ENCODE measurements at regions of chr22 and their contacts with region 1.

Region 1: GRCh38 chr22:23539135-23539838 is 40.8 kb downstream of the IGLL1 start:
- DNase-seq: peak; percentile 72 to 83 (median 76)
- ATAC-seq: peak; percentile 88 to 99 (median 98)
- H3K4me3 ChIP-seq: peak overlapping the region in 3 of 12 donors; percentile 3 to 25 (median 22)
- H3K27ac ChIP-seq: peak overlapping the region in 1 of 12 donors; percentile 39
- H3K4me1 ChIP-seq: peaks cover 0 to 17% (median 0%) of the 10 kb centered on the region in 12 donors
- H3K27me3 ChIP-seq: no peaks in the 10 kb centered on the region
- CTCF ChIP-seq: peak; percentile 76 to 91 (median 85)
- POLR2A ChIP-seq: no peak

Region 2: DNA sequence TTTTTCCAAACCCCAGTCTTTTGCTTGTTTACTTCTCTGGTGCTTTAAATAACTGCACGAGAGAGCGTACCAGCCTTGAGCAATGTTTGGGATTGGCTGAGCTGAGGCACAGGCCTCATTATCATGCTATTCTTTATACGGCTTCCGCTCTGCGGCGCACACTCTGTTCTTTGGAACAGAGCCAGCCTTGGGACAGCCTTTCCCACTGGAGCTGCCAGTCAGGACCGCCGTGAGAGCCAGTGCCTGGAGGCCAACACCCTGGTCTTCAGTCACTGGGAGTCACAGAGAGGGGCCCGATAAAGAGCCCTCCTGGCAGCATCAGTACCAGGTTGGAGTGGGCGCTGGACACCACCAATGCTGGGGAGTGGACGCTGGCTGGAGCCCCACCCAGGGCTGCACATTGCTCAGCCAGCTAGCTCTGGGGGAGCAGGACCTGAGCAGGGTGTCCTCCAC is 233.3 kb before region 1 on chr22:
- intact Hi-C with region 1: loop called in 6 of 10 experiments (anchors 5 to 10 kb)
- DNase-seq: peak; percentile 70 to 91 (median 86)
- ATAC-seq: peak; percentile 88 to 93 (median 91)
- H3K4me3 ChIP-seq: peak overlapping the region in 2 of 12 donors; percentile 19 to 32
- H3K27ac ChIP-seq: peak overlapping the region; percentile 68 to 94 (median 80)
- H3K4me1 ChIP-seq: peaks cover 5 to 32% (median 22%) of the 10 kb centered on the region in 12 donors
- H3K27me3 ChIP-seq: no peaks in the 10 kb centered on the region
- CTCF ChIP-seq: no peak
- POLR2A ChIP-seq: no peak

Region 3: GRCh38 chr22:23385291-23386244 is 153.7 kb before region 1 on chr22:
- intact Hi-C with region 1: loop called in 7 of 10 experiments (anchors 1 to 10 kb)
- DNase-seq: peak; percentile 68 to 89 (median 77)
- ATAC-seq: peak; percentile 49 to 89 (median 82)
- H3K4me3 ChIP-seq: no peak overlapping the region
- H3K27ac ChIP-seq: no peak overlapping the region
- H3K4me1 ChIP-seq: peaks cover 0 to 9% (median 0%) of the 10 kb centered on the region in 12 donors
- H3K27me3 ChIP-seq: peaks cover 0 to 8% (median 0%) of the 10 kb centered on the region in 9 donors
- CTCF ChIP-seq: peak; percentile 92 to 100 (median 98)
- POLR2A ChIP-seq: no peak

Region 4: GRCh38 chr22:23402275-23403151 is 136.8 kb before region 1 on chr22:
- intact Hi-C with region 1: loop called in 5 of 10 experiments (anchors 5 to 10 kb)
- DNase-seq: peak in 1 of 5 donors; percentile 28
- ATAC-seq: peak in 3 of 4 donors; percentile 43 to 76 (median 62)
- H3K4me3 ChIP-seq: peak overlapping the region in 9 of 12 donors; percentile 19 to 48 (median 33)
- H3K27ac ChIP-seq: no peak overlapping the region
- H3K4me1 ChIP-seq: peaks cover 0 to 9% (median 0%) of the 10 kb centered on the region in 12 donors
- H3K27me3 ChIP-seq: peaks cover 0 to 19% (median 0%) of the 10 kb centered on the region in 9 donors
- CTCF ChIP-seq: peak; percentile 9 to 56 (median 36)
- POLR2A ChIP-seq: no peak

Region 5: DNA sequence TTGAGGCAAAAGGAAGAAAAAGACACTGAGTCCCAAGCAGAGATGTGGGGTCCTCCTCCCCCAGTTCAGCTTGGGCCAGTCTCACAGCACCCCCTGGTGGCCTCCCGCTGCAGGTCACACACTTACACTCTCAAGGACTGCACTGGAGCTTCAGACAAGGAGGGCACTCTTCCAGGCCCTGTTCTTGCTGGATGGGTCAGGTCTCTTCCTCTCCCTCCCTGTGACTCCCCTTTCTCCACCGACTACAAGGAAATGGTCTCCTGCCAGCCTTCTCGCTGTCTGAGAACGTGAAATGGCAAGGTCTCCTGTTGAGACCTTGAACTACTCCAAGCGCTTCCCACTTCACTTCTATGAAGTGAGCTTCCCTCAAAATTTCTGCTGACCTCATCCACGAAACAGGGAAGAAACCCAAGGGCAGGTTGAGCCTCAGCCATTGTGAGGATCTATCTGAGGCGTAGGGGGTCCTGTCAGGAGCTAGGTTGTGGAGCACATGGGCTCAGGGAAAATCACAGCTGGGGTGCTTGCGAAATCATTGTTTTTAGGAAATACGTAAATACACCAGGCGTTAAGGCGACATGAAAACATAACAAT is 52.0 kb after region 1 on chr22:
- intact Hi-C with region 1: loop called in 3 of 10 experiments (anchors 2 to 5 kb)
- DNase-seq: peak; percentile 24 to 73 (median 49)
- ATAC-seq: peak; percentile 47 to 70 (median 68)
- H3K4me3 ChIP-seq: no peak overlapping the region
- H3K27ac ChIP-seq: no peak overlapping the region
- H3K4me1 ChIP-seq: no peaks in the 10 kb centered on the region
- H3K27me3 ChIP-seq: no peaks in the 10 kb centered on the region
- CTCF ChIP-seq: peak; percentile 58 to 83 (median 73)
- POLR2A ChIP-seq: no peak

Region 6: DNA sequence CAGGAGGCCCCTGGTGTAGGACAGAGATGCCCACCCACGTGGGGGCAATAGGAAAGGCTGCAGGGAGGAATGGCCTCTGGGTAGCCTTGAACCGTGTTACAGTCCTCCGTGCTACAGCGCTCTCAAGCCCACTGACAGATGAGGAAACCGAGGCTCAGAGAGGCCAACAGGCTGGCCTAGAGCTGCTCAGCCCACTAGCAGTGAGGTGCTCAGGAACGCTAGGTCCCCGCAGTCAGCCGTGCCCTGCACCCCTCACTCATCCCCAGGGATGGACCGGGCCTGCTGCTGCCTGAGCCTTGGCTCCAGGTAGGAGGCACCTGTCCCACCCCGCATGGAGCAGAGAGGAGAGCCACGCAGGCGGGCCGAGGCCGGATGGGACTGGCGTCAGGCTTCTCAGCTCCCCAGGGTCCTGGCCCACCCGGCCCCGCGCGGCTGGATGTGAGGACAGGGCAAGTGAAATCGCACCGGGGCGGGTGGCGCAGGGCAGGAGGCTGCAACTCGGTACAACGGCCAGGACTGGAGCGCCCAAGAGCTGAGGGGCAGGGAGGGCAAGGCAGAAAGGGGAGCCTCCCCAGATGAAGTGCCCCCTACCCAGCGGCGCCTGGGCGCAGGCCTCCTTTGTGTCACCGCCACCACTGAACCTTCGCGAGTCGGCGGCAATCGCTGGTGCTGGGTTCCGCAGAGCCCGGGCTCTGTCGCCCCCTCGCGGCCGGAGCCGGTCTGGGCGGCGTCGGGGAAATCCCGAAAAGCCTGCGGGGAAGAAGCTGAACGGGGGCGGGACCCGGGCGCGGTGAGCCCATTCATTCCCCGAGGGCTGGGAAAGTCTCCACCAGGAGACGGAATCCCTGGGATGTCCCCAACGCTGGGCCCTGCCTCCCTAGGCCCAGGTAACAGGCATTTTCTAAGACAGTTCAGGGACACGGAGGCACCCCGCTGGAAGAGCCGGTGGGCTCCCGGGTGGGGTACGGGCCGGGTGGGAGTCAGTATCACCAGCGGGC is 310.0 kb after region 1 on chr22:
- intact Hi-C with region 1: loop called in 9 of 10 experiments (anchors 5 to 10 kb)
- DNase-seq: peak; percentile 81 to 94 (median 85)
- ATAC-seq: peak; percentile 11 to 65 (median 56)
- H3K4me3 ChIP-seq: peak overlapping the region in 4 of 12 donors; percentile 5 to 27 (median 24)
- H3K27ac ChIP-seq: no peak overlapping the region
- H3K4me1 ChIP-seq: peaks cover 3 to 51% (median 31%) of the 10 kb centered on the region in 12 donors
- H3K27me3 ChIP-seq: no peaks in the 10 kb centered on the region
- CTCF ChIP-seq: peak; percentile 95 to 99 (median 98)
- POLR2A ChIP-seq: no peak

Measured in heart left ventricle (tissue), 16 donors.